Activated CD8-positive, alpha-beta memory T cell treated with anti-CD3 and anti-CD28 coated beads, Interleukin-2, amount 10 ng/mL, durations not matched to agents 7 days and 5 days (primary cell): ENCODE measurements at regions of chr4 and their contacts with region 1.

Region 1: DNA sequence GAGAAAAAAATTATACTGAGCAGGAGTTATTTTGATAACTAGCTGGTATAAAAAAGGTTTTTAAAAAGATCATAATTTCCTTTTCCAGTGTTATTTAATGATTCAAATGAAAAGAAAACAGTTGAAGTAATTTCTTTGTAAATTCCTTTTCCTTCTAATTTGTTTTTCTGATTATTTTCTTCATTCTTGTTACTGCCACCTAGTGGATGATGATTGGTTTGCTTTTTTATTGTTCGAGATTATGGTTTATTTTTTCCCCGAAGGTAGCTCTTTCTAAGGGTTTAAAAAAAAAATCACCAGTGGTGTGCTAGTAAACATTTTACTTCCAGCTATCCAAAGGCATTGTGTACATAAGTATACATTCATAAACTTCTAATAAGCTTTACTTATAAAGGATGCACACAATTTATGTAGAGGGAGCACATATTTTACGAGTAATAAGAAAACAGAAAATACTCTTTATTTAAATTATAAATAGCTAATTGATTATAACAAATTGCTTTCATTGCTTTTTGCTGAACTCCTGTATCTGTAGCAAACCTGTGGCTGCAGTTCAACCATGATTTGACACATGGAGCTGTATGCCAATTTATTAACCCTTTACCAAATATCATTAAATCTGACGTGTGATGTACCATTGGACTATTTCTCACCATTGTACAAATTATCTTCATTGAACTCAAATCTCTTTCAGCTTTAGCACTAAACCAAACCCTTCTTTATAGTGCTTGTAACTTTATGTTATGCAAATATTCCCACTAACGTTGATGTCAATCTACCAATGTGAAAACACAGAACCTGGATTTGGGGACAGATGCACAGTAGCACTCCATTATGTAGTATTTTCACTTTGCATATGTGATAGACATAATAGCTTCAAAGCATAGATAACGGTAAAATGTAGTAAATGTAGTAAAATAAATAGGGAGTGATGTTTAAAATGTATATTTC is 97.8 kb upstream of the ANK2 start:
- DNase-seq: no peak
- ATAC-seq: no peak
- H3K4me3 Mint-ChIP-seq: no peak overlapping the region
- H3K27ac Mint-ChIP-seq: no peak overlapping the region
- H3K4me1 Mint-ChIP-seq: no peaks in the 10 kb centered on the region
- H3K27me3 Mint-ChIP-seq: peaks cover 16% of the 10 kb centered on the region

Region 2: DNA sequence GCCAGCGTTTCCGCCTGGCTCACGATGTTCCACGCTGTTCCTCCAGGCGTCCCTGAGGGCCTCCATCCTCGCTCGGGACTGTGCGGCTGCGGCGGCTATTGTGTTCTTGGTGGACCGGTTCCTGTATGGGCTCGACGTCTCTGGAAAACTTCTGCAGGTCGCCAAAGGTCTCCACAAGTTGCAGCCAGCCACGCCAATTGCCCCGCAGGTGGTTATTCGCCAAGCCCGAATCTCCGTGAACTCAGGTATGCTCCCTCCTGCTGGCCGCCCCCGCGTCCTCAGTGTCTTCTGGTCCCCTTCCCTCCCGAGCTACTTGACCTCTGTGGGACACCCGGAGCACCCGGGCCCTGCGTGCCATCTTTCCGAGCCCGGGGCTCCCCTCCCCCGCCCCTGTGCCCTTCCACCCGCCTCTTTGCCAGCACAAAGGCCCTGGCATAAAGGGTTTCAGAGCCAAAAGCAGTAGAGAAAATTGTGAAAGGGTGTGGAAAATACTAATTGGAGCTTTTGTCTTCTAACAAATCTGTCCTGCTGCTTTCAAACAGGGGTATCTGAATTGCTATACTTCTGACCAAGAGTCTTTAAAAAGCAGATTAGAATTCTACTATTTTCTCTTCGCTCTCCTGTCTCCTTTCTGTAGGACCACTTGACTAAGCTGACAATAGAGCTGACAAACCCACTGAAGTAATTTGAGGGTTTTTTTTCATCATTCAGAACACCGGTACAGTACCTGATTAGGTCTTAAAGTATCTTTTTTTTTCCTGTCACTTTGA is 539.7 kb before region 1 on chr4:
- CTCF ChIA-PET with region 1: no interaction called
- DNase-seq: no peak
- ATAC-seq: no peak
- H3K4me3 Mint-ChIP-seq: no peak overlapping the region
- H3K27ac Mint-ChIP-seq: no peak overlapping the region
- H3K4me1 Mint-ChIP-seq: no peaks in the 10 kb centered on the region
- H3K27me3 Mint-ChIP-seq: no peaks in the 10 kb centered on the region

Region 3: DNA sequence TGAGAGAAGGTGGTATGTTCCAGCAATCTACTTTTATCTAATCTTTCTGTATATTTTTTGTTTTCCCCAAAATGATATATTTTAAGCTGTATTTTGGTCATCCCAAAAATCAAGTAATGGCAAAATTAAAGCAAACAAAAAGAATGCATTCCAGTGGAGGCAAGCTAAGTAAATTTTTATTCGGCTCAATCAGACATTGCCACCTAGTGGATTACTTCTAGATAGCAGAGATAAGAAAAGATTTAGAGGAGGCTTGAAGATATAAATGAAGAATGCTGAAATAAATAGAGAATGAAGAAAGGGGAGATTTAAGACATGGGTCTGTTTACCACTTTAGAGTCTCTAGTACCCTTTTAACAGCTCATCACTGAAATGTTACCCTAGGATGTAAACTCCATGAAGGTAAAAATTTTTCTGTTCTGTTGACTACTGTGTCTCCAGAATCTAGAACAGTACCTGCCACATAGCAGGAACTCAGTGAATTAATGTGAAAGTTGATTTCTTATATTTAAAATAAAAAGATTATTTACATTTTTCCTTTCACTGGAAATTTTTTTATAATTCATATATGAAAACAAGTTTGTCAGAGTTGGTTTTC is 13.1 kb before region 1 on chr4:
- CTCF ChIA-PET with region 1: interaction called, 11 read pairs
- DNase-seq: no peak
- ATAC-seq: no peak
- H3K4me3 Mint-ChIP-seq: no peak overlapping the region
- H3K27ac Mint-ChIP-seq: no peak overlapping the region
- H3K4me1 Mint-ChIP-seq: no peaks in the 10 kb centered on the region
- H3K27me3 Mint-ChIP-seq: peaks cover 10% of the 10 kb centered on the region